Activated naive CD4-positive, alpha-beta T cell treated with anti-CD3 and anti-CD28 coated beads, Interleukin-2, amount 10 ng/mL, durations not matched to agents 7 days and 5 days (primary cell): ENCODE measurements at regions of chr1 and their contacts with region 1.

Region 1: GRCh38 chr1:23098463-23099170 is 70.0 kb downstream of the LUZP1 start:
- DNase-seq: peak; percentile 70
- H3K4me3 Mint-ChIP-seq: no peak overlapping the region
- H3K27ac Mint-ChIP-seq: no peak overlapping the region
- H3K4me1 Mint-ChIP-seq: peaks cover 39% of the 10 kb centered on the region
- H3K27me3 Mint-ChIP-seq: no peaks in the 10 kb centered on the region

Region 2: DNA sequence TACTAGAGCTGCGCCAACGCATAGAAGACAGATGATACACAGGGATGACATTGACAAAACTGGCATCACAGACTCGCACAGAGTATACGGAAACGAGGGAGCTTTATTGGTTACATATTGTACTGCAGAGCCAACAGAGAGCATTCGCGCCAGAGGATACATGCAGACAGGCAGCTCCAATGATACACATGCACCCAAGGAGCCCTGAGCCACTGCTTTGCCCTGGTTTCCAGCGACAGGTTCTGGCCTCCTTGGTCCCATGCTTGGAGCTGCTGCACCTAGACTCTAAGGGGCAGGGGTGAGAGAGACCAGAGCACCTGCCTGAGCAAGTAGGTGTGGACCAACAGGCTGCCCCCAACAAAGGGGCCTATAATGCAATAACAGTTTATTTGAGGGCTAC is 13.7 kb before region 1 on chr1:
- CTCF ChIA-PET with region 1: interaction called, 15 read pairs
- DNase-seq: no peak
- H3K4me3 Mint-ChIP-seq: no peak overlapping the region
- H3K27ac Mint-ChIP-seq: no peak overlapping the region
- H3K4me1 Mint-ChIP-seq: no peaks in the 10 kb centered on the region
- H3K27me3 Mint-ChIP-seq: no peaks in the 10 kb centered on the region

Region 3: GRCh38 chr1:23108918-23109533 is 10.4 kb after region 1 on chr1:
- CTCF ChIA-PET with region 1: interaction called, 33 read pairs
- DNase-seq: no peak
- H3K4me3 Mint-ChIP-seq: no peak overlapping the region
- H3K27ac Mint-ChIP-seq: no peak overlapping the region
- H3K4me1 Mint-ChIP-seq: peaks cover 41% of the 10 kb centered on the region
- H3K27me3 Mint-ChIP-seq: no peaks in the 10 kb centered on the region

Region 4: DNA sequence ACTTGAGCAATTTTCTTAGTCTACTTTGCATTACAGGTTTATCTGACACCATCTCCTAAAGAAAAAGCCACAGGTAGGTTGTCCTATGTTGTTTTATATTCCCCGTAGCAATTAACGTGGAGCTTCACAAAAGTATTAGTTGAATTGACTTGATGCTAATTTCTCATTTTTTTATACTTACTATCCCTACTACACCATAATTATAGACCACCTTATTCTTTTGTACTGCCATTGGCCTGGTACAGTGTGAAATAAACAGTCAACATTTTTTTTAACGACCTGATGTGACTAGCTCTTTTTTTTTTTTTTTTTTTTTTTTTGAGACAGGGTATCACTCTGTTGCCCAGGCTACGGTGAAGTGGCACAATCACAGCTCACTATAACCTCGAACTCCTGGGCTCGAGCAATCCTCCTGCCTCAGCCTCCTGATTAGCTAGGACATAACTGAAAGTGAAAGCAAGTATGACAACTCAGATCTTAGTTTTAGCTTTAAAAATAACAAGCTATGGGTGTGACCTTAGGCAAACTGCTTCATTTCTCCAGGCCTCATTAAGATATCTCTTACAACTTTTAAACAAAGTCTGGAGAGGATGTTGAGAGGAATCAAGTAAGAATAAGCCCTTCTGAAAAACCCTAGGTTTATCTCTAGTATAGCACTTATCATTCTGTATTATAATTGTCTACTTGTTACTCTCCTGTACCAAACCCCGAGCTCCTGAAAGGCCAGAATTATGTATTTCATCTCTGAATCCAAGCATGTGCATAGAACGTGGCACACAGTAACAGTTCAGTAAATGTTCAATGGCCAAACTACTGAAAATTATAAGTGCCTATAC is 20.6 kb after region 1 on chr1:
- CTCF ChIA-PET with region 1: interaction called, 19 read pairs
- DNase-seq: peak; percentile 62
- H3K4me3 Mint-ChIP-seq: peak overlapping the region; percentile 48
- H3K27ac Mint-ChIP-seq: peak overlapping the region; percentile 85
- H3K4me1 Mint-ChIP-seq: peaks cover 57% of the 10 kb centered on the region
- H3K27me3 Mint-ChIP-seq: no peaks in the 10 kb centered on the region

Region 5: GRCh38 chr1:23168457-23169194 is 70.0 kb after region 1 on chr1 and contains the start of gene LUZP1:
- CTCF ChIA-PET with region 1: interaction called, 13 read pairs
- DNase-seq: peak; percentile 90
- H3K4me3 Mint-ChIP-seq: peak within 1 kb of the TSS; percentile 99
- H3K27ac Mint-ChIP-seq: peak within 1 kb of the TSS; percentile 85
- H3K4me1 Mint-ChIP-seq: peaks cover 33% of the 10 kb centered on the region
- H3K27me3 Mint-ChIP-seq: peaks cover 25% of the 10 kb centered on the region

Region 6: DNA sequence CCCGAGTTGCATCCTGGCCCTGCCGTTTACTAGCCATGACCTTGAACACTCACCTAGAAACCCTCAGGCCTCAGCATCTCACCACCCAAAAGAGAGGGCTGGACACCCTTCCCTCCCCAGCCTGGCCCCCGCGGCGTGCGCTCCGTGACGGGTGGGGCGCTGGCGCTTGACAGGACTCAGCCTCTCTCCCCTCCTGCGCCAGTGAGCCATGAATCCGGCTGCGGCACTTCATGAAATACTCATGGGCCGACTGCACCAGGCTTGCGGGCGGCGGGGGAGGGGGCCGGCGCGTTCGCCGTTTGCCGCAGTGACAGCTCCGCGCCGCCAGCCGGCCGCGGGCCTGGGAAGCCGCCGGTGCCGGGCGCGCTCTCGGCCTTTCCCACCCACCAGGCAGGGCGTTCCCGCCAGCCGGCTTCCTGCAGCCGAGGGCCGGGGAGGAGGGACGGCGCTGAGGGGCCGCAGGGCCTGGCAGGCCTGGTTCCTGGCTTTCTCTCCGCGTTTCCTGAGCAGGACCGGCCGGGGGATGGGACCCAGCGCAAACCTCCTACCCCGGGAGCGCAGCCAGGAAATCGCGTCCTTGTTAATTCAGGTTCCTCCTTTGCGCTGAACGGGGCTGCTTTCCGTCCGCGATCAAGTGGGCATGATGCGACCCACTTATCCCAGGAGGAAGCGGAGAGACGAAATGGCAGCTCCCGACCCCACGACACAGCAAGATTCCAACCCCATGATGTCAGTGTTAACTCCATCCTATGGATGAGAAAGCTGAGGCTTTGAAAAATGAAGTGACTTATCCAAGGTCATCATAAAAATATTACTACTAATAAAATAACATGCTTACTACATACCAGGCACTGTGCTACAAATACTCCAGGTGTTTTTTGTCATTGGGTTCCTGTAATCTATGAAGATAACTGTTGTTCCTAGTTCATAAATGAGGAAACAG is 79.1 kb after region 1 on chr1:
- CTCF ChIA-PET with region 1: interaction called, 438 read pairs
- DNase-seq: peak; percentile 67
- H3K4me3 Mint-ChIP-seq: peak overlapping the region; percentile 65
- H3K27ac Mint-ChIP-seq: no peak overlapping the region
- H3K4me1 Mint-ChIP-seq: peaks cover 20% of the 10 kb centered on the region
- H3K27me3 Mint-ChIP-seq: peaks cover 44% of the 10 kb centered on the region